BJ (cell line): ENCODE measurements at regions of chr9 and their contacts with region 1.

Region 1: DNA sequence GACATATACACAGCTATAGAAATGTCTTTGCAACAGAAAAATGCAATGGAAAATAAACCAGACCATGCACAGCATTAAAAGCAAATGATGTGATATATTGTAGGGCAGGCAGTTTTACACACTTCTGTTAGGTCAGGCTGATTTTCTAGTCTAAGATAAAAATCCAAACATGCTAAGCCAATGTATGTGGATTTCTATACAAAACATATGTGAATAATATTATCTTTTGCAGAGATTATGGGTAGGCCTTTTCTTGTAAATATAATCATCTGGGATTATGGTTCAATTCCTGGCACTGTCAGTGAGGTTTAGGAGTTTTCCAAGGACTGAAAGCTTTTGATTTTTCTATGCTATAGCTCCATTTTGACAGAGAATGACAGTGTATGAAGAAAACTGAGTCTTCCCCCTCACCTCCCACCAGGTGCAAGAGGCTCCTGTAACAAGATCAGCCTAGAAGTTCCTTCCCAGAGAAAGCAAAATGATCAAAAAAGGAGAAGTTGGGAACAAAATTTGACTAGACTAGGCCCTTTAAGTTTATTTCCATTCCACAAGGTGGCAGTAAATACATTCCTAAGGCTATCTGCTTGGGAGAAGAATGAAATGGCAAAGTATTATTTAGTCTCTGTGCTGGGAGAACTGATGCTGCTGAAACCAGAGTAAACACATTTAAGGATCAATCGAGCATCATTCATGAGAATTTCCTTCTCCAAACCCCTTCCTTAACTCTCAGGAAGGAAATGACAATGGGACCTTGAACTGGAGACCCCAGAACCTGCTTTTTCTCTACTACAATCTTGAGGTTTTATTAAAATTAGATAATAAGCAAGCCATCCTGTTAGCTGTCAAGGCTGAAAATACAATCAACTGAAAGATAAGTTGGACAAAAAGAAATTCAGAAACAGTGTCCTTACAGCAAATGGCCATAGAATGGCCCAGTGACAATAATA is 133.0 kb upstream of the TUT7 start:
- DNase-seq: no peak
- H3K4me3 ChIP-seq: no peak overlapping the region
- H3K27me3 ChIP-seq: no peaks in the 10 kb centered on the region
- CTCF ChIP-seq: peak; percentile 55

Region 2: DNA sequence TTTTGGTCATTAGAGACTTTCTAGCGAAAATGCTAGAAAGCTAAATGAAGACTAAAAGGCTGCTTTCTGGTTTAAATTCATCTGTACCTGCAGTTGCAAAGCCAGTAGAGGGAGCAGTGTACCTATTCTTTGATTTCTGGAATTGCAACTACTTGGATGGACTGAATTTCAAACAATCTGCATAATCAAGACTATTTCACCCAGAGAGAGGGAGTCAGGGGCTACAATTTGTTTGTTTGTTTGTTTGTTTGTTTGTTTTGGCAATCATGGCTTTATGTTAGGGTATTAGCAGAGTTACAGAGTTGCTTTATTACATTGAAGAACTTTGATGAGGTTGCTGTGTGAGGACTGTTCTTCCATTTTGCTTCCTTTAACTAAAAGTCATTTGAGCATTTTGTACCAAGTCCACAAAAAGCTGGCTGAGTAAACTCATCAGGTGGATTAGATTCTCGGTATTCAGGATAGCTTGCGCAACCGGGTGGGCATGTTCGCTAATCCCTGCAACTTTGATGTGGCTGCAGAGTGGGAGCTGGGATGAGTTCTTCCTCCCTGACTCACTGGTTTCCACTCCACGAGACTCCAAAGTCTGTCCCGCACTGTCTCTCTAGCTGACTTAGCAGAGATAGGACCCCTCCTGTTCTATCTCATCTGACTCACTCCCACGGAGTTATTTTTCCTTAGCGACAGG is 53.0 kb before region 1 on chr9:
- CTCF ChIA-PET with region 1: interaction called, 34 read pairs
- POLR2A ChIA-PET with region 1: no interaction called
- DNase-seq: no peak
- H3K4me3 ChIP-seq: no peak overlapping the region
- H3K27me3 ChIP-seq: no peaks in the 10 kb centered on the region
- CTCF ChIP-seq: peak; percentile 78

Region 3: GRCh38 chr9:86637515-86637914 is 150.4 kb after region 1 on chr9:
- CTCF ChIA-PET with region 1: interaction called, 17 read pairs
- POLR2A ChIA-PET with region 1: no interaction called
- DNase-seq: no peak
- H3K4me3 ChIP-seq: no peak overlapping the region
- H3K27me3 ChIP-seq: no peaks in the 10 kb centered on the region
- CTCF ChIP-seq: peak; percentile 74

Region 4: GRCh38 chr9:86948074-86948929 is 461.1 kb after region 1 on chr9:
- CTCF ChIA-PET with region 1: interaction called, 34 read pairs
- POLR2A ChIA-PET with region 1: interaction called, 12 read pairs
- DNase-seq: no peak
- H3K4me3 ChIP-seq: peak overlapping the region; percentile 46
- H3K27me3 ChIP-seq: no peaks in the 10 kb centered on the region
- CTCF ChIP-seq: peak; percentile 99

Region 5: DNA sequence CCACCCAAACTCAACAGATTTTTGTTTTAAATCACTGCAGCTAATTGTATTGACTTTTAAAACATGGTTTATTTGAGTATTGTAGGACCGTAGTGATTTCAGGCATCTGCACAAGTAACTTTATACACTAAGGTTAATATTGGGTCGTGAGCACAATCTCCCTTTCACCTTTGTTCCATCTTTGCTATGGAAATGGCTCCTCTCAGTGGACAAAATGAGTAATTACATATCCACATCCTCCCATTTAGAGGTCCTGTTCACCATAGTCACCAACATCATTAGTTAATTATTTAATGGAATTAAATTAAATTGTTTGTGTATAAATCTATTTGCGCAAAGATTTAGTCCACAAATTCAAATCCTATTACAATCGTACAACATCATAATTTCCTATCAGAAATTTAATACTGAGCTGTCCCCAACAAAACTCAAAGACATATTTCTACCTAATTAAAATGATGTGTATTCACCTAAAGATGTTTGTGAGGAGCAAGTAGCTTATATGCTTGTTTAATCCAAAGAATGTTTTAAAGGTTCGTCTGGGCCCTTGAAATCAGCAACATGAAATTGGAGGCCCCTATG is 837.5 kb after region 1 on chr9:
- CTCF ChIA-PET with region 1: interaction called, 17 read pairs
- POLR2A ChIA-PET with region 1: no interaction called
- DNase-seq: no peak
- H3K4me3 ChIP-seq: no peak overlapping the region
- H3K27me3 ChIP-seq: no peaks in the 10 kb centered on the region
- CTCF ChIP-seq: peak; percentile 52